GM12878 (cell line): ENCODE measurements at regions of chr1 and their contacts with region 1.

Region 1: GRCh38 chr1:23496490-23497181 is 12.7 kb upstream of the ASAP3 start:
- DNase-seq: no peak
- ATAC-seq: peak; percentile 26; the same call in 2 of the 3 replicates
- H3K4me3 ChIP-seq: no peak overlapping the region
- H3K27ac ChIP-seq: no peak overlapping the region
- H3K4me1 ChIP-seq: no peaks in the 10 kb centered on the region
- H3K27me3 ChIP-seq: no peaks in the 10 kb centered on the region
- CTCF ChIP-seq: no peak
- EP300 ChIP-seq: no peak
- POLR2A ChIP-seq: no peak
- RAD21 ChIP-seq: no peak

Region 2: GRCh38 chr1:23507507-23507906 is 10.9 kb after region 1 on chr1:
- CTCF ChIA-PET with region 1: interaction called, 20 read pairs
- POLR2A ChIA-PET with region 1: no interaction called
- RAD21 ChIA-PET with region 1: no interaction called
- SMC1A ChIA-PET with region 1: interaction called, 11 read pairs
- in situ Hi-C with region 1: no loop called
- intact Hi-C with region 1: no loop called
- DNase-seq: no peak
- ATAC-seq: no peak
- H3K4me3 ChIP-seq: no peak overlapping the region
- H3K27ac ChIP-seq: no peak overlapping the region
- H3K4me1 ChIP-seq: no peaks in the 10 kb centered on the region
- H3K27me3 ChIP-seq: no peaks in the 10 kb centered on the region
- CTCF ChIP-seq: no peak
- EP300 ChIP-seq: no peak
- POLR2A ChIP-seq: no peak
- RAD21 ChIP-seq: no peak

Region 3: GRCh38 chr1:23530747-23531561 is 34.3 kb after region 1 on chr1 and contains the start of gene E2F2:
- CTCF ChIA-PET with region 1: interaction called, 784 read pairs
- POLR2A ChIA-PET with region 1: interaction called, 8 read pairs
- RAD21 ChIA-PET with region 1: interaction called, 153 read pairs
- SMC1A ChIA-PET with region 1: interaction called, 258 read pairs
- in situ Hi-C with region 1: loop called (anchors 5 kb)
- intact Hi-C with region 1: no loop called
- DNase-seq: no peak
- ATAC-seq: peak; percentile 72
- H3K4me3 ChIP-seq: peak within 1 kb of the TSS; percentile 85
- H3K27ac ChIP-seq: peak within 1 kb of the TSS; percentile 89
- H3K4me1 ChIP-seq: peaks cover 64% of the 10 kb centered on the region
- H3K27me3 ChIP-seq: no peaks in the 10 kb centered on the region
- CTCF ChIP-seq: peak in 2 of 3 experiments; percentile 23 to 29; a peak in 3 of 6 replicates
- EP300 ChIP-seq: no peak
- POLR2A ChIP-seq: peak; percentile 66
- RAD21 ChIP-seq: no peak
- polyA plus RNA-seq, gene E2F2: 4.3 to 4.6 TPM

Region 4: GRCh38 chr1:23657659-23658275 is 161.1 kb after region 1 on chr1:
- CTCF ChIA-PET with region 1: interaction called, 13 read pairs
- POLR2A ChIA-PET with region 1: no interaction called
- RAD21 ChIA-PET with region 1: no interaction called
- SMC1A ChIA-PET with region 1: no interaction called
- in situ Hi-C with region 1: no loop called
- intact Hi-C with region 1: loop called (anchors 5 kb)
- DNase-seq: no peak
- ATAC-seq: peak; percentile 97
- H3K4me3 ChIP-seq: no peak overlapping the region
- H3K27ac ChIP-seq: no peak overlapping the region
- H3K4me1 ChIP-seq: no peaks in the 10 kb centered on the region
- H3K27me3 ChIP-seq: no peaks in the 10 kb centered on the region
- CTCF ChIP-seq: peak; percentile 61 to 98 (median 91)
- EP300 ChIP-seq: no peak
- POLR2A ChIP-seq: no peak
- RAD21 ChIP-seq: peak; percentile 45